Transverse colon (tissue), 4 donors: ENCODE measurements at regions of chr5 and their contacts with region 1.

Region 1: GRCh38 chr5:157743163-157744050 is at the start of gene LSM11:
- DNase-seq: peak; percentile 93
- H3K4me3 ChIP-seq: peak within 1 kb of the TSS; percentile 75 to 92 (median 86)
- H3K27ac ChIP-seq: peak within 1 kb of the TSS; percentile 60 to 83 (median 78)
- H3K4me1 ChIP-seq: peaks cover 12 to 22% (median 15%) of the 10 kb centered on the region in 4 donors
- H3K27me3 ChIP-seq: no peaks in the 10 kb centered on the region
- CTCF ChIP-seq: peak; percentile 96 to 100 (median 99)
- EP300 ChIP-seq: no peak
- POLR2A ChIP-seq: peak; percentile 37
- total RNA-seq, gene LSM11: 4.1 to 10.0 (median 5.8) TPM

Region 2: DNA sequence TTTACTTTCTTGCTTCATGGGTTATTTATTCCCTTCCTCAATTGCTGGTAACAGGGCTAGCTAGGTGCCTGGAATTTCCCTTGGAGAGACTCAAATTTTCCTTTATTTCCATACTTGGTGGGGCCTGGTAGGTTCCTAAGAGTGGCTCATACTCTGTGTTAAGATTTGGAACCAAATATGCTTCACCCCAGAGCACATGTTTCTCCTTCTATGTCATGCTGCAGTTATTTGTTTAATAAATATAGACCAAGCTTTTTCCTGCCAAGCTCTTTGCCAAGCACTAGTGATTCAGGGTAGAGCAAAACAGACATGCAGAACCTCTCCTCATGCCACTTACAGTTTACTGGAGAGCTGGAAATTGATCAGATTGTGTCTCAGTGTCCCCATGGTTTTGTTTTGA is 1706.8 kb before region 1 on chr5:
- in situ Hi-C with region 1: no loop called
- intact Hi-C with region 1: loop called (anchors 10 kb)
- DNase-seq: no peak
- H3K4me3 ChIP-seq: no peak overlapping the region
- H3K27ac ChIP-seq: peak overlapping the region in 1 of 4 donors; percentile 11
- H3K4me1 ChIP-seq: no peaks in the 10 kb centered on the region
- H3K27me3 ChIP-seq: no peaks in the 10 kb centered on the region
- CTCF ChIP-seq: no peak
- EP300 ChIP-seq: no peak
- POLR2A ChIP-seq: no peak

Region 3: DNA sequence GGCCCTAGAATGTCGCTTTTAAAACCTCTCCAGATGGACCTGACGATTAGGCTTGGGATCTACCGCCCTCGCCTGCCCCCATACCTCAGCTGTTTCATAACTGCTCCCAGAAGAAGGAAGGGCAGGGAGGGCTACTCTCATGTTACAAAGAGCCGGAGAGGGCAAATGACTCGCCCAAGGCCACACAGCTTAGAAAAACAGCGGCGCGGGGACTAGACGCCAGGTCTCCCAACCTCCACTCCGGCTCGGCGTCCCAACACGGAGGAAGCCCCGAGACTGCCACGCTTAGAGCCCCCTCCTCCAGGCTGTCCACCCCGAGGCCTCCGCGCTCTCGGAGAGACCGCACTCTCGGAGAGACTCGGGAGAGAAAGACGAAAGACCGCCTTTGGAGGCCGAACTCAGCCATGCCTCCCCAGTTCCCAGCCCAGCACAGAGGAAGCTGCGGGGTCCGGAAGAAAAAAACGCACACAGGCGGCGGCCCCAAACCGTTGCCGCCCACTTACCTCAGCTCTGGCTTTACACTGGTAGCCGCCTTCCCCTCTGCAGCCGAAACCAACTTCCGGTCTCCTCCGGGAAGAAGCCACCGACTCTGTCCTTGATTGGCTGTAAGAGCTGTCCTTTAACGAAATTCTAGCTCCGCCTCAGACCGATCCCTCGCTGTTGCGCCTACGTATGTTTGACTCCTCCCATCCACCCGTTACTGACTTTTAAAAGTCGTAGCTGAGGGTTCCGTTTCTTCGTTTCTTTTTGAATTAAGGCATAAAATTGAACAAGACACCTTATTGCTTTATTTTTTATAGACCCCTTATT is 600.9 kb before region 1 on chr5 and contains the start of gene MED7:
- in situ Hi-C with region 1: loop called in 1 of 4 experiments (anchors 25 kb)
- intact Hi-C with region 1: no loop called
- DNase-seq: peak; percentile 94
- H3K4me3 ChIP-seq: peak within 1 kb of the TSS; percentile 79 to 100 (median 90)
- H3K27ac ChIP-seq: peak within 1 kb of the TSS; percentile 89 to 99 (median 94)
- H3K4me1 ChIP-seq: peaks cover 7 to 24% (median 12%) of the 10 kb centered on the region in 4 donors
- H3K27me3 ChIP-seq: no peaks in the 10 kb centered on the region
- CTCF ChIP-seq: no peak
- EP300 ChIP-seq: no peak
- POLR2A ChIP-seq: peak; percentile 89
- total RNA-seq, gene MED7: 10.0 to 12.1 (median 11.0) TPM in 3 of 4 donors, not detected in the other

Region 4: DNA sequence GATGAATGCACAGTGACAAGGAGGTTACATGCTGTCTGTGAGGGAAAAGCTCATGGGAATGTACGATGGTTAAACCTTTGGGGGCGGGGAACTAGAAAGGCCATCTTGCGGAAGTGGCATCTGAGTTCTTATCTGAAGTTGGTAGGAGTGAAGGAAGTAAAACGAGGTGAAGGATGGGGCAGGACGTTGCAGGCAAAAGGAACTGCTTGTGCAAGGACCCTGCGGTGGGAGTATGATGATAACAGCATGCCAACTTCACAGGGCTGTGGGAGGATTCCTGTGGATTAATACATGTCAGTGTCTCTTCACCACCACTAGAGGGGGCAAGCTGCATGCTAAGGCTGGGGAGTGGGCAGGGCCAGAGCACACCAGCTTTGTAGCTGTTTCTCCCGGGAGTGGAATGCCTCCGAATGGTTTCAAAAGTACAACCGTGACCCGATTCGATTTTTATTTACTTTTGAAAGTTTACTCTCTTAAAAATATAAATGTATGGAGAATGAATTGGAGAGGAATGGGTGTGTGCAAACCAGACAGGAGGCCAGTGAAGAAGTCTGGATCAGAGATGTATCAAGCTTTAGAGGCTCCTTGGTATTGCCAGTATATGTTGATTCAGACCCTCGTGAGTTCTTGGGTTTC is 415.0 kb before region 1 on chr5:
- in situ Hi-C with region 1: loop called in 3 of 4 experiments (anchors 5 to 25 kb)
- intact Hi-C with region 1: no loop called
- DNase-seq: peak; percentile 58
- H3K4me3 ChIP-seq: peak overlapping the region in 3 of 4 donors; percentile 8 to 12 (median 11)
- H3K27ac ChIP-seq: peak overlapping the region; percentile 4 to 70 (median 25)
- H3K4me1 ChIP-seq: peaks cover 0 to 9% (median 5%) of the 10 kb centered on the region in 4 donors
- H3K27me3 ChIP-seq: no peaks in the 10 kb centered on the region
- CTCF ChIP-seq: peak; percentile 86 to 92 (median 90)
- EP300 ChIP-seq: no peak
- POLR2A ChIP-seq: no peak

Region 5: DNA sequence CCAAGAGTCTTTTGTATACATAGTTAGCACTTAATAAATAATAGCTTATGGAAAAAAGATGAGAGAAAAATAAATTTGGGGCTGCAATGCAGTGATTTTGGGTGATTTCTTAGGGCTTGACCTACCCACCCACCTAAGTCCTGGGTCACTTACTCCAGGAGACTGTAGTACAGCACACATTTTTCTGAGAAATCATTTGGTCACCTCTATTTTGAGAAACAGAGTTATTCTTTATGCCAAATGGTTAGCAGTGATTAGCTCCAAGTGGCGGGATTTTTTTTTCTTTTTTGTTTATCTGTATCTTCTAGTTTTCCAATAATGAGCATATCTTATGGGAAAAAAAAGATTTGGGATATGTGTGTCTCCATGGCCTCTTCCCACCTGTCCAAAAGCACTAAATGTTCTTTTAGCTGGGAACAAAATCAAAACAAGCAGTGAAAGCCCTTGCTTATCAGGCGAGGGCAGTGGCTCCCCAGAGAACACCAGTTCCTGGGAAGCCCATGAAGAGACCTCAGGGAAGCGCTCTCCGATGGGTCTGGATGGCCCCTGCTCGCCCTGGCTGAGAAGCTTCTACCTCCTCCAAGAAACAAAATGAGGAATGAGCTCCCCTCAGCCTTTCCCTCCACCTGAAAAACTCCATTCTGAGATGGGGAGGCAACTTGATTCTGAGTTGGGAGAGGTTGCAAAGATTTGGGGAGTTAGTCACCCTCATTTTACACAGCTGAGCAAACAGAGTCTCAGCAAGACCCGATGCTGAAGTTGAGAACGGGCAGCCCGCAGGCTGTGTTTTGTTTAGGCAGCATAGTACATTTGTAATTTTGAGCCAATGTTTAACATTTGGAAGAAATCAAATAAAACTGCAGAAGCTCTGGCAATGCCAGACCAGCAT is 407.6 kb before region 1 on chr5:
- in situ Hi-C with region 1: loop called in 2 of 4 experiments (anchors 10 to 25 kb)
- intact Hi-C with region 1: no loop called
- DNase-seq: no peak
- H3K4me3 ChIP-seq: no peak overlapping the region
- H3K27ac ChIP-seq: peak overlapping the region; percentile 5 to 49 (median 41)
- H3K4me1 ChIP-seq: no peaks in the 10 kb centered on the region
- H3K27me3 ChIP-seq: no peaks in the 10 kb centered on the region
- CTCF ChIP-seq: no peak
- EP300 ChIP-seq: no peak
- POLR2A ChIP-seq: no peak

Region 6: GRCh38 chr5:157431544-157432200 is 311.7 kb before region 1 on chr5:
- in situ Hi-C with region 1: loop called in 1 of 4 experiments (anchors 25 kb)
- intact Hi-C with region 1: no loop called
- DNase-seq: peak; percentile 23
- H3K4me3 ChIP-seq: no peak overlapping the region
- H3K27ac ChIP-seq: no peak overlapping the region
- H3K4me1 ChIP-seq: peaks cover 0 to 9% (median 0%) of the 10 kb centered on the region in 4 donors
- H3K27me3 ChIP-seq: no peaks in the 10 kb centered on the region
- CTCF ChIP-seq: peak; percentile 51 to 69 (median 52)
- EP300 ChIP-seq: no peak
- POLR2A ChIP-seq: no peak

Region 7: GRCh38 chr5:157476702-157477408 is 266.6 kb before region 1 on chr5:
- in situ Hi-C with region 1: loop called in 1 of 4 experiments (anchors 25 kb)
- intact Hi-C with region 1: no loop called
- DNase-seq: no peak
- H3K4me3 ChIP-seq: no peak overlapping the region
- H3K27ac ChIP-seq: peak overlapping the region; percentile 60 to 81 (median 74)
- H3K4me1 ChIP-seq: peaks cover 8 to 32% (median 19%) of the 10 kb centered on the region in 4 donors
- H3K27me3 ChIP-seq: no peaks in the 10 kb centered on the region
- CTCF ChIP-seq: peak; percentile 74 to 76 (median 75)
- EP300 ChIP-seq: no peak
- POLR2A ChIP-seq: no peak